Activated T-helper 1 cell treated with anti-CD3 and anti-CD28 coated beads, Interleukin-12 subunit alpha, Interleukin-12 subunit beta, Interleukin-2, Interleukin-4 antibody, amounts not matched to agents 30 ng/mL and 10 ng/mL and 1 ng/mL, durations not matched to agents 14 hours and 24 hours and 36 hours (primary cell): ENCODE measurements at regions of chr6 and their contacts with region 1.

Region 1: DNA sequence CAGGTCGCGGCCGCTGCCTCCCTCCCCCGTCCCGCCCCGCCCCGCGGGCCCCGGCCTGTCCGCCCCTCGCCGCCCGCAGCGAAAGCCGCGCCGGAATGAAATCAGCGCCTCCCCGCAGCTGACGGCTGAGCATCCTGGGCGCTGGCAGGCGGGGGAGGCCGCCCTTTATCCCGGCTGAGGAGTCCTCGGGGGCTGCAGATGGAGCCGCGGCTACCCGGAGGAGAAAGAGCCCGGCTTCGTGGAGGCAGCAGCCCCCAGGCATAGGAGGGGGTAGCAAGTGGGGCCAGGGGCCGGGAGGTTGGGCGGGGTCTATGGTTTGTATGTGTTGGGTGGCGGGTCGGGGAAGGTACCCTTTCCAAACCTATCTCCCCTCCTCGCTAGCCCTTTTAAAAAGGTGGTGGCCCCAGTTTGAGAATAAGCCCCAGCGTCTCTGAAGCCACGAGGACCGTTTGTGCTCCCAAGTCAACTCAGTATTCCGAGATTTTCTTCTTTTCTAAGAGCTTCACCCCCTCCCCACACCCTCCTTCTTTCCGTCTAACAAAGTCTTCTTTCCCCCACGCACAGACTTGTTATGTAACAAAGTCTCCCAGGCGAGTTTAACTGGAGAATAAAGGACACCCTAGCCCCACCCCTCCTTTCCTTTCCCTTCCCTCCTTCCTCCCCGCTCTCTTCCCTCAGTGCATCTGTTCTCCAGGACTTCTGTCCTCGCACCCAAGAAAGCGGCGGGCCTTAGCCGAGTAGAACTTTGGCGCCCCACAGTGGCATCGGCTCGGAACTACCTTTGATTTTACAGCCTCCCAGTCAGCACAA is 11.0 kb downstream of the POU3F2 start:
- DNase-seq: peak; percentile 43
- H3K4me3 Mint-ChIP-seq: peak overlapping the region; percentile 46
- H3K27ac Mint-ChIP-seq: peak overlapping the region; percentile 48
- H3K4me1 Mint-ChIP-seq: peaks cover 10% of the 10 kb centered on the region
- H3K27me3 Mint-ChIP-seq: peaks cover 81% of the 10 kb centered on the region

Region 2: GRCh38 chr6:97669191-97670031 is 1176.0 kb before region 1 on chr6:
- intact Hi-C with region 1: loop called (anchors 5 kb)
- DNase-seq: no peak
- H3K4me3 Mint-ChIP-seq: no peak overlapping the region
- H3K27ac Mint-ChIP-seq: no peak overlapping the region
- H3K4me1 Mint-ChIP-seq: no peaks in the 10 kb centered on the region
- H3K27me3 Mint-ChIP-seq: no peaks in the 10 kb centered on the region

Region 3: GRCh38 chr6:98769544-98769943 is 75.9 kb before region 1 on chr6:
- intact Hi-C with region 1: loop called (anchors 2 kb)
- DNase-seq: no peak
- H3K4me3 Mint-ChIP-seq: no peak overlapping the region
- H3K27ac Mint-ChIP-seq: no peak overlapping the region
- H3K4me1 Mint-ChIP-seq: peaks cover under 1% of the 10 kb centered on the region
- H3K27me3 Mint-ChIP-seq: peaks cover 9% of the 10 kb centered on the region

Region 4: DNA sequence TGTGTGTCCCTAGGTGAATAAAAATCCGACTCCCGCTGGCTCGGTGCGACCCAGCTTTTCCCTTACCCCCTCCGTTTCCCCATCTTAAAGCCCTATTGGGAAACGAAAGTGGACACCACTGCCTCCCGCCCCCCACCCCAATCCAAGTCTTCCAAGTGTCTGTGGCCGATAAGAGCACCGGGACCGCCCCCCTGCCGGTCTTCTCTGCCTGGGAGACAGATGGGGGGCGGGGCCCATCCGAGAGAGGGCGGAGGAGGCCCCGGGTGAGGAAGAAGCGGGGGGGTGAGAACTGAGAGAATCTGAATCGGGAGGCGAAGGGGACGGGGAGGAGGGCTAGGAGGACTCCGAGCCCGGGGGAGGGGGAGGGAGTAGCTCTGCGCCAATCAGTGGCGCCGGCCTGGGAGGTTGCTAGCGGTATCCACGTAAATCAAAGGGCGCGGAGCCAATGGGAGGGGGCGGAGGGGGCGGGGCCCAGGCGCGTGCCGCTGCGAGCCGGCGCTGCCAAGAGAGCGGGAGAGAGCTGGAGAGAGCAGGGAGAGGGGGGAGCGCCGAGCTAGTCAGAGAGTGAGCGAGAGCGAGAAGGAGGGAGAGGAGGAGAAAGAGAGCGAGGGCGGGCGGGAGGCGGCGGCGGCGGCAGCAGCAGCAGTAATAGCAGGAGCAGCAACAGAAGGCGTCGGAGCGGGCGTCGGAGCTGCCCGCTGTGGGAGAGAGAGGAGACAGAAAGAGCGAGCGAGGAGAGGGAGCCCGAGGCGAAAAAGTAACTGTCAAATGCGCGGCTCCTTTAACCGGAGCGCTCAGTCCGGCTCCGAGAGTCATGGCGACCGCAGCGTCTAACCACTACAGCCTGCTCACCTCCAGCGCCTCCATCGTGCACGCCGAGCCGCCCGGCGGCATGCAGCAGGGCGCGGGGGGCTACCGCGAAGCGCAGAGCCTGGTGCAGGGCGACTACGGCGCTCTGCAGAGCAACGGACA is 11.1 kb before region 1 on chr6 and contains the start of gene POU3F2:
- intact Hi-C with region 1: loop called (anchors 1 kb)
- DNase-seq: peak; percentile 33
- H3K4me3 Mint-ChIP-seq: peak within 1 kb of the TSS; percentile 84
- H3K27ac Mint-ChIP-seq: peak within 1 kb of the TSS; percentile 87
- H3K4me1 Mint-ChIP-seq: peaks cover 17% of the 10 kb centered on the region
- H3K27me3 Mint-ChIP-seq: peaks cover 81% of the 10 kb centered on the region
- total RNA-seq, gene POU3F2: not detected in 2 replicates

Region 5: GRCh38 chr6:99119109-99120031 is 274.0 kb after region 1 on chr6:
- intact Hi-C with region 1: loop called (anchors 2 kb)
- DNase-seq: peak; percentile 8
- H3K4me3 Mint-ChIP-seq: no peak overlapping the region
- H3K27ac Mint-ChIP-seq: no peak overlapping the region
- H3K4me1 Mint-ChIP-seq: no peaks in the 10 kb centered on the region
- H3K27me3 Mint-ChIP-seq: peaks cover 2% of the 10 kb centered on the region